Activated CD4-positive, alpha-beta T cell treated with anti-CD3 and anti-CD28 coated beads, Interleukin-2, amount 10 ng/mL, durations not matched to agents 7 days and 5 days (primary cell): ENCODE measurements at regions of chr1 and their contacts with region 1.

Region 1: GRCh38 chr1:22039594-22040285 is 12.8 kb upstream of the CDC42 start:
- DNase-seq: peak; percentile 97
- H3K4me3 Mint-ChIP-seq: peak overlapping the region; percentile 75
- H3K27ac Mint-ChIP-seq: peak overlapping the region; percentile 96
- H3K4me1 Mint-ChIP-seq: peaks cover 58% of the 10 kb centered on the region
- H3K27me3 Mint-ChIP-seq: no peaks in the 10 kb centered on the region

Region 2: DNA sequence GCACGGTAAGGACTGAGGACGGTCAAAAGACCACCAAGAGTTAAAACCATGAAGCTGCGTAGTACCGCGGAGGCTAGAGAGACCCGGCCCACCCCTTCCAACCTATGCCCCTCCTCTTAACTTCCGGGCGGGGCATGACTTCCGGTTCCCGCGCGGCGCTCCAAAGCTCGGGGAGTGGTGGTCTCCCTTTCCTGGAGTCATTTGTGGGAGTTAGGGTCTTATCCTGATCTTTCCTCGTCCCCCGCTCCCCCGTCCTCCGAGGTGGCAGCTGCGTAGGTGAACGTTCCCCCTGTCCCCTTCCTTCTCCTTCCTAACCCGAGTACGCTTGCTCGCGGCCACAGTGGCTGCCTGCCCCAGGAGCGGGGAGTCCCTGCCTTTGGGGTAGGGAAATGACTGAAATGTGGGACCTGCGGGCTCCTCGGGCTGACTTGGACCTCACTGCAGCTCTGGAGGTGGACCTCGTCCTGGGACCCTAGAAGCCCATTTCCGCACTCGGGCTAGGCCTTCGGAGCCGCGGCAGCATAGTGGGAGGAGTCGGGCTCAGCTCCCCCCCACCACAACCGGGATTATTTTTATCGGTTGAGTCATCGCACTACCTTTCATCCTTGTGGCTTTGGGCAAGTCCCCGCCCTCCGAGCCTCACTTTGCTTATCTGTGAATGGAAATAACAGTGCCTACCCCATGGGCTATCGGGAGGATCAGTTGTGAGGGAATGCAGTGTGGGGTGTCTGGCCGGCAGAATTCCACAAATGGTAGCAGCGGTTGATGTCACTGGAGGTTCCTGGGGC is 14.2 kb before region 1 on chr1:
- CTCF ChIA-PET with region 1: interaction called, 105 read pairs
- POLR2A ChIA-PET with region 1: interaction called, 27 read pairs
- DNase-seq: peak; percentile 96
- H3K4me3 Mint-ChIP-seq: peak overlapping the region; percentile 93
- H3K27ac Mint-ChIP-seq: peak overlapping the region; percentile 100
- H3K4me1 Mint-ChIP-seq: peaks cover 67% of the 10 kb centered on the region
- H3K27me3 Mint-ChIP-seq: no peaks in the 10 kb centered on the region

Region 3: DNA sequence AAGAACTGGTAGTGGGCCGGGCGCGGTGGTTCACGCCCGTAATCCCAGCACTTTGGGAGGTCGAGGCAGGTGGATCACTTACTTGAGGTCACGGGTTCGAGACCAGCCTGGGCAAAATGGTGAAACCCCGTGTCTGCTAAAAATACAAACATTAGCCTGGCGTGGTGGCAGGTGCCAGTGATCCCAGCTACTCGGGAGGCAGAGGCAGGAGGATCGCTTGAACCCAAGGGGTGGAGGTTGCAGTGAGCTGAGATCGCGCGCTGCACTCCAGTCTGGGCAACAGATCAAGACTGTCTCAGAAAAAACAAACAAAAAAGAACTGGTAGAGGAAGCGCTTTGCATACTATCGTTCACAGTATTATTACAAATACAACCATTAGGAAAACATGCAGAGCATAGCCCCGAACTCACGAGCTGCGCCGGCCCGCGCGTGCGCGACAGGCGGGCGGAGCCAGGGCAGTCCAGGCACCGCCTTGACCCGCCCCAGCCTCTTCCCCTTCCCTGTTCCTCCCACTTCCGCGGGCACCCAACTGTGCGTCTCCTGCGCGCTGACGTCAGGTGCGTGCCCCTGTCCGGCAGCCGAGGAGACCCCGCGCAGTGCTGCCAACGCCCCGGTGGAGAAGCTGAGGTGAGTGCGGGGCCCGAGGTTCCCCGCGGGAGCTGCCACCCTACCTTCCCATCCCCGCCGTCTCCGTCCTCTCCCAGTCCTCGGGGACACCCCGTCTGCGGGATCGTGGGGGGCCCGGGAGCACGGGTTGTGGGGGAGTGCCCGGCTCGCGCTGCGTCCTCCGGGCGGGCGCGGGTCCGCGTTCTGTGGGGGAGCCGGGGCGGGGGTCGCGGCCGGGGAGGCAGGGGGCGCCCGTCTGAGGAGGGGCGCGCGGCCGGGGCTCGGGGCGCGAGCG is 12.6 kb after region 1 on chr1 and contains the start of gene CDC42:
- CTCF ChIA-PET with region 1: interaction called, 40 read pairs
- POLR2A ChIA-PET with region 1: interaction called, 10 read pairs
- DNase-seq: peak; percentile 97
- H3K4me3 Mint-ChIP-seq: peak within 1 kb of the TSS; percentile 99
- H3K27ac Mint-ChIP-seq: peak within 1 kb of the TSS; percentile 99
- H3K4me1 Mint-ChIP-seq: peaks cover 63% of the 10 kb centered on the region
- H3K27me3 Mint-ChIP-seq: no peaks in the 10 kb centered on the region
- total RNA-seq, gene CDC42: 378 to 413 TPM

Region 4: DNA sequence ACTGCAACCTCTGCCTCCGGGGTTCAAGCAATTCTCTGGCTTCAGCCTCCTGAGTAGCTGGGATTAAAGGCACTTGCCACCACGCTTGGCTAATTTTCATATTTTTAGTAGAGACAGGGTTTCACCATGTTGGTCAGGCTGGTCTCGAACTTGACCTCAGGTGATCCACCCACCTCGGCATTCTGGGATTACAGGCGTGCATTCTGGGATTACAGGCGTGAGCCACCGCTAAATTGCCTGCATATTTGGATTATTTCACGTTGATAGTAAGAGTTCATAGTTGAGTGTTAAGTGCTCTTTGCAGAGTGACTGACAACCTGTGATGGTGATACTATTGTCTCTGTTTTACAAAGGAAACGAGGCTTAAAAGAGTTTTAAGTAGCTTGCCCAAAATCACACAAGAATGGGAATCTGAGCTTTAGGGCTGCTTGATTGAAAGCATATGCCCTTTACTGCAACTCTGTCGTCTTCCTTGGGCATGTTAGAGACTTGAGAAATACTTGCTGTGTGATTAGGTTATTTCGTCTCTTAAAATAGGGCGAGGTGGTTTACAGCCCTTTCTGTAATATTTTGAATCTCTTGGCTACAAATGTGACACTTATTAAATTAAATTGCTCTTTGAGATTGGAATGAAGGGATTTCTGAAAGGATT is 25.1 kb after region 1 on chr1:
- CTCF ChIA-PET with region 1: no interaction called
- POLR2A ChIA-PET with region 1: no interaction called
- DNase-seq: no peak
- H3K4me3 Mint-ChIP-seq: no peak overlapping the region
- H3K27ac Mint-ChIP-seq: peak overlapping the region; percentile 13
- H3K4me1 Mint-ChIP-seq: peaks cover 75% of the 10 kb centered on the region
- H3K27me3 Mint-ChIP-seq: no peaks in the 10 kb centered on the region

Region 5: GRCh38 chr1:22077728-22078127 is 38.0 kb after region 1 on chr1:
- CTCF ChIA-PET with region 1: no interaction called
- POLR2A ChIA-PET with region 1: no interaction called
- DNase-seq: no peak
- H3K4me3 Mint-ChIP-seq: no peak overlapping the region
- H3K27ac Mint-ChIP-seq: peak overlapping the region; percentile 44
- H3K4me1 Mint-ChIP-seq: peaks cover 82% of the 10 kb centered on the region
- H3K27me3 Mint-ChIP-seq: no peaks in the 10 kb centered on the region